Thyroid gland (tissue), 4 donors: ENCODE measurements at regions of chr3 and their contacts with region 1.

Region 1: DNA sequence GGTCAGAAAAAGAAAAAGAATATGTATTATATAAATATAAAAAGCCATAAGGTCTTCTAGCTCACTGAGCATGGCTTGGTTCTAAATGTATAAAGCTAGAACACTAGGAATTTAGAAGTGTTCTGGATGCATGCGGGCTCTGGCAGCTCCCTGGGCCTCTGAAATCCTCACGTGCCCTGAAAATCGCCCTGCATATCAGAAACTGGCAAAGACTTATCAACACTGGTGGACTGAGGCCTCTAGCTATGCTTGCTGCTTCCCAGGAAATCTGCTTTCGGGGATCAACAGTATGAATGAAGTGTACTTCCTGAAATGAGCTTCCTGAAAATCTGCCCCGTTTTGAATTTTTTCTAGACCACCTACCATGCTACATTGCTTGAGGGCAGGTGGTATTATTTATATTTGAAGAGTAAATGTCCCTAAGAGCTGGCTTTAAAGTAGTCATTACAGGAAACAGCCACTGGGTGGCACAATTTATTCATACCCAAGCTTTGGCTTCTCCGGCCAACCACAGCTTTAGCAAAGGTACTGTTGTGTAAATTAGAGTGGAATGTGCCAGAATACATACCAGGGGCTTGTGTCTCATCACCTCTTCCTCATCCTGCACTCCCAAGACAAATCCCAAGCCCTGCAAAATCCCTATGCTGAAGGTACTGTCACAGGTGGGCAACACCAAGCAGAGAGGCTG is 17.7 kb downstream of the CRTAP start:
- DNase-seq: peak; percentile 45 to 49
- H3K4me3 ChIP-seq: no peak overlapping the region
- H3K27ac ChIP-seq: no peak overlapping the region
- H3K4me1 ChIP-seq: no peaks in the 10 kb centered on the region
- H3K27me3 ChIP-seq: no peaks in the 10 kb centered on the region
- CTCF ChIP-seq: peak; percentile 51 to 78 (median 67)
- POLR2A ChIP-seq: no peak

Region 2: DNA sequence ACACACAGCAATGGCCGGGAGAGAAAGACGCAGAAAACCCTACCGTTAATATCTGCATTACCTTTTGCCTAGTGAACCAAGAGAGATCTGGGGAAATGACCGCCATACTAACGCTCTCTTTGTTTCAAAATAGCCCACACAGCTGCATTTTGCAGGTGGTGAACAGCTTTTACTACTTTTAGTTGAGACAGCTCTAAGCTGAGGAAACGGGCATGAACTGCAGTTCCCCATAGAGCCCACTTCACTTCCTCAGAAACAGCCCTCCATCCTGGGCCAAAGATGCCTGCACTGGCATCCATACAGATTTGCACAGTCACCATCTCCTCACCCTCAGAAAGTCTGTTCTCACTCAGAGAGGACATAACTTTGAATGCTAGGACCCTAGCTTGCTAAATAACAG is 1104.9 kb before region 1 on chr3:
- intact Hi-C with region 1: no loop called
- DNase-seq: no peak
- H3K4me3 ChIP-seq: no peak overlapping the region
- H3K27ac ChIP-seq: no peak overlapping the region
- H3K4me1 ChIP-seq: no peaks in the 10 kb centered on the region
- H3K27me3 ChIP-seq: no peaks in the 10 kb centered on the region
- CTCF ChIP-seq: no peak
- POLR2A ChIP-seq: no peak

Region 3: DNA sequence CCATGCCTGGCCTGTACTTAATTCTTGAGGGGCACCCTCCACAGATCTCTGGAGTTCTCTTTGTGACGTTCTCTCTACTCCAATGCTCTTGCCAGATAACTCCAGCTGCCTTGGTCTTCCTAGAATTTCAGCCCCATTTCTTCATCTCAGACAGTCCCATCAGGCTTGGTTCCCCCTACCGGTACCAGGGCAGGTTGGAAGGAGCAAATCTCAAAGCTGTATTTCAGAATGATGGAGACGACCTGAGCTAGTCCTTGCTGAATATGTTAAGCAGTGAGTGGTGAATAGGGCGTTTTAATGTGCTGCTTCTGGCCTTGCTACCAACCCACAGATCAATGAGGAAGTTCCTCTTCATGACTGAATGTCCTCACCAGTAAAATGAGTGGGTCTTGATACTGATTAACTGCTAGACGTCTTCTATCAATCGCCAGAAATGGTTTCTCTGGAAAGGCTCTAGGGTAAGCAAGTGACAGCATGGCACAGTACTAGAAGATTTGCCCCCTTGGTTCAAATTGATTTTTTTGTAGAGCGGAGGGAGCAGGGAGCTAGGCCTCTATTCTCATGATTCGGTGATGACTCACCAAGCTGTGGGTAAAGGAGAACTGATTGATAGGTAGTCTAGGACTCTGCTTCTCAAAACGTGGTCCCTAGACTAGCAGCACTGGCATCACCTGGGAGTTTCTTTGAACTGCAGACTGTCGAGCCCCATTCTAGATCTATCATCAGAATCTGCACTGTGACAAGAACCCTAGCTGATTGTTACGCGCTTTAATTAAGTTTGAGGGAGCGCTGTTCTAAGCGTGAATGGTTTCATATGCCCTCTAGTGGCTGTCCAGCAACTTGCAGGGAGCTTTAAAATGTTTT is 241.0 kb after region 1 on chr3:
- intact Hi-C with region 1: loop called (anchors 5 kb)
- DNase-seq: peak; percentile 22 to 37
- H3K4me3 ChIP-seq: no peak overlapping the region
- H3K27ac ChIP-seq: no peak overlapping the region
- H3K4me1 ChIP-seq: no peaks in the 10 kb centered on the region
- H3K27me3 ChIP-seq: no peaks in the 10 kb centered on the region
- CTCF ChIP-seq: peak; percentile 54 to 92 (median 84)
- POLR2A ChIP-seq: no peak

Region 4: GRCh38 chr3:33833408-33834095 is 702.1 kb after region 1 on chr3:
- intact Hi-C with region 1: no loop called
- DNase-seq: no peak
- H3K4me3 ChIP-seq: no peak overlapping the region
- H3K27ac ChIP-seq: no peak overlapping the region
- H3K4me1 ChIP-seq: no peaks in the 10 kb centered on the region
- H3K27me3 ChIP-seq: no peaks in the 10 kb centered on the region
- CTCF ChIP-seq: no peak
- POLR2A ChIP-seq: no peak